GM23248 (cell line): ENCODE measurements at regions of chr4 and their contacts with region 1.

Region 1: GRCh38 chr4:15149839-15150476 is 147.7 kb downstream of the CPEB2 start:
- DNase-seq: peak; percentile 90
- H3K4me3 ChIP-seq: no peak overlapping the region
- H3K27ac ChIP-seq: peak overlapping the region; percentile 81
- H3K4me1 ChIP-seq: peaks cover 18% of the 10 kb centered on the region
- H3K27me3 ChIP-seq: no peaks in the 10 kb centered on the region

Region 2: GRCh38 chr4:13654158-13654797 is 1495.7 kb before region 1 on chr4:
- in situ Hi-C with region 1: loop called (anchors 25 kb)
- DNase-seq: peak; percentile 86
- H3K4me3 ChIP-seq: peak overlapping the region; percentile 77
- H3K27ac ChIP-seq: no peak overlapping the region
- H3K4me1 ChIP-seq: 0 out of 2 replicates have a peak, but pooled peaks cover 3% of the 10 kb centered on the region
- H3K27me3 ChIP-seq: no peaks in the 10 kb centered on the region